Heart left ventricle (tissue), 16 donors: ENCODE measurements at regions of chr15 and their contacts with region 1.

Region 1: DNA sequence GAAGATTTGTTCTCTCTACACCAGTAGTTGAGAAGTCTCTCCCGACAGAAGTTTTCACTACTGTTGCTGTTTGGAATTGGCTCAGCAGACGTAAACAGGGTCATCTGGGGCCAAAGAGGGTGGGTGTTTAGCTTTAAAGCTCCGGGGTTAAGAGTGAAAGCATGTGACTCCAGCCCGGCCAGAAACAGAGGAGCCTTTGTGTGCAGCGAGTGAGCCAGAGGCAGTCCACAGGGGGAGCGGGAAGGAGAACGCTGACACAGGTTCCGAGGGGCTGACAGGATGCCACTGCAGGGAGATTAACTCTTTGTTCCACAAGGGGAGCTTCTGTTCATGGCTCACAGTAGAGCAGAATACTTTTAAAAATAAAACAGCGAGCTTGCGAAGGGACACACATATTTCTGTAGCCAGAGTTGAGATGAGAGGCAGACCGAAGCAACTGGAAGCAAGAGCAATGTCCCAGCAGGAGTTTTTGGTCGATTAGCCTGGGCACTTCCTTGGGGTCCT is 26.9 kb downstream of the BMF start:
- DNase-seq: peak; percentile 75 to 86 (median 83)
- ATAC-seq: peak; percentile 90 to 97 (median 95)
- H3K4me3 ChIP-seq: peak overlapping the region in 10 of 12 donors; percentile 11 to 58 (median 46)
- H3K27ac ChIP-seq: peak overlapping the region; percentile 58 to 92 (median 74)
- H3K4me1 ChIP-seq: peaks cover 0 to 37% (median 23%) of the 10 kb centered on the region in 12 donors
- H3K27me3 ChIP-seq: no peaks in the 10 kb centered on the region
- CTCF ChIP-seq: peak in 3 of 12 donors; percentile 25 to 35 (median 26)
- POLR2A ChIP-seq: peak in 1 of 2 donors; percentile 41

Region 2: GRCh38 chr15:40095371-40096093 is 13.8 kb after region 1 on chr15:
- intact Hi-C with region 1: loop called in 1 of 10 experiments (anchors 2 kb)
- DNase-seq: no peak
- ATAC-seq: no peak
- H3K4me3 ChIP-seq: no peak overlapping the region
- H3K27ac ChIP-seq: peak overlapping the region in 3 of 12 donors; percentile 17 to 56 (median 32)
- H3K4me1 ChIP-seq: peaks cover 17 to 84% (median 71%) of the 10 kb centered on the region in 12 donors
- H3K27me3 ChIP-seq: no peaks in the 10 kb centered on the region
- CTCF ChIP-seq: no peak
- POLR2A ChIP-seq: no peak